ENCODE measurements at regions of chr11 and their contacts with region 1.

Region 1: GRCh38 chr11:119307219-119307618 is 9.7 kb downstream of the MCAM start:
- DNase-seq: no peak
- ATAC-seq: peak; percentile 49
- H3K4me3 ChIP-seq: no peak overlapping the region
- H3K27ac ChIP-seq: no peak overlapping the region
- H3K4me1 ChIP-seq: no peaks in the 10 kb centered on the region
- H3K27me3 ChIP-seq: no peaks in the 10 kb centered on the region
- CTCF ChIP-seq: peak; percentile 46; the same call in 1 of the 2 replicates

Region 2: DNA sequence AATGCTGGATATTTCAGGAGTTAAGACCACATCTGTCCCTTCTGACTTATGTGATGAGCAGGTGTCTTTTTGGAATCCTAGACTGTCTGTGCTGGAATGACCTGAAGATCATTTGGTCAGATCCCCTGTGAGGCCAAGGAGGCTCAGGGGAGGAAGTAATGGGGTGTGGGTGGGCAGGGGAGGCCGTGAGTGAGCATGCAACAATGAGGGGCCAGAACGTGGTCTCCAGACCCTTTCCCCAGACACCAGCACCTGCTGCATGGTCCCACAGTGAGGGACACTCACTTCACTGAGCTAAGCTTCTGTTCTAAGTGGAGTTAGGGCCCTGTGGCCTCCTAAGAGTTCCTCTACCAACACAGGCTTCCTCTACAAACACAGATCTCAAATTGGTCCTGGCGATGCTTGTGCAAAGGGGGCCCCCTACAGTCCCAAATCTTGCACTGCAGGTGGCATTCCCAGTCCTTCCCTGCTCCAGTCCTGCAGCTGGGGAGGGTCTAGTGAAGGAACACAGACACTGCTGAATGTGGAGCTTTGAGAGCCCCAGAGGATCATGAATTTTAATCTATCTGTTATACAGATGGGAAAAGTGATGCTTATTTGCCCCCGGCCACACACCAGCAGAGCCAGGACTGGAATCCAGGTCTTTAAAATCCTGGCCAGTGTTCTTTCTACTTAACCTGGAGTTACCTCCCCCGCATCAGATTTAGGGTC is 66.9 kb after region 1 on chr11:
- CTCF ChIA-PET with region 1: interaction called, 12 read pairs
- POLR2A ChIA-PET with region 1: no interaction called
- intact Hi-C with region 1: no loop called
- DNase-seq: peak; percentile 89
- ATAC-seq: peak; percentile 84
- H3K4me3 ChIP-seq: no peak overlapping the region
- H3K27ac ChIP-seq: no peak overlapping the region
- H3K4me1 ChIP-seq: peaks cover 14% of the 10 kb centered on the region
- H3K27me3 ChIP-seq: no peaks in the 10 kb centered on the region
- CTCF ChIP-seq: peak; percentile 98

Region 3: GRCh38 chr11:119403021-119403420 is 95.8 kb after region 1 on chr11:
- CTCF ChIA-PET with region 1: no interaction called
- POLR2A ChIA-PET with region 1: no interaction called
- intact Hi-C with region 1: no loop called
- DNase-seq: no peak
- ATAC-seq: no peak
- H3K4me3 ChIP-seq: no peak overlapping the region
- H3K27ac ChIP-seq: no peak overlapping the region
- H3K4me1 ChIP-seq: no peaks in the 10 kb centered on the region
- H3K27me3 ChIP-seq: no peaks in the 10 kb centered on the region
- CTCF ChIP-seq: no peak

Region 4: GRCh38 chr11:119624102-119624615 is 316.9 kb after region 1 on chr11:
- CTCF ChIA-PET with region 1: interaction called, 10 read pairs
- POLR2A ChIA-PET with region 1: no interaction called
- intact Hi-C with region 1: no loop called
- DNase-seq: peak; percentile 17
- ATAC-seq: no peak
- H3K4me3 ChIP-seq: no peak overlapping the region
- H3K27ac ChIP-seq: no peak overlapping the region
- H3K4me1 ChIP-seq: no peaks in the 10 kb centered on the region
- H3K27me3 ChIP-seq: no peaks in the 10 kb centered on the region
- CTCF ChIP-seq: peak; percentile 86

Measured in PC-3 (cell line).